PC-9 (cell line): ENCODE measurements at regions of chr1 and their contacts with region 1.

Region 1: DNA sequence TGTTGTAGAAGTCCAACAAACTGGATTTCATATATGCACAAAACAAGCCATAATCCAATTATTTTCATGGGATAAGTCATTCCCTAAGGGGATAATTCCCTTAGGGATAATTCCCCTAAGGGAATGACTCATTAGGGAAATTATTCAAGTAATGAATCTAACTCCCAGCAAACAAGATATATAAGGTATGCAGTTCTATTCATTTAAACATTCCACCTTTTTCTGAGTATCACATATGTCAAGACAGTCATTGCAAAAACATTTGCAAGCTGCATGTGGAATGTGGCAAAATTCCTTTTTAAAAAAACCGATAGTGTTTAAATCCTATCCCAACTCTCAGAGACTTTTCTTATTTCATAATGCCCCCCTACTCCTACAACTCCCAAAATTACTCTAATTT is 131.2 kb downstream of the AKT3 start:
- DNase-seq: peak in 1 of 2 experiments; percentile 76
- H3K4me3 ChIP-seq: no peak overlapping the region
- H3K27ac ChIP-seq: peak overlapping the region; percentile 61
- H3K4me1 ChIP-seq: peaks cover 19% of the 10 kb centered on the region
- H3K27me3 ChIP-seq: no peaks in the 10 kb centered on the region
- CTCF ChIP-seq: no peak

Region 2: DNA sequence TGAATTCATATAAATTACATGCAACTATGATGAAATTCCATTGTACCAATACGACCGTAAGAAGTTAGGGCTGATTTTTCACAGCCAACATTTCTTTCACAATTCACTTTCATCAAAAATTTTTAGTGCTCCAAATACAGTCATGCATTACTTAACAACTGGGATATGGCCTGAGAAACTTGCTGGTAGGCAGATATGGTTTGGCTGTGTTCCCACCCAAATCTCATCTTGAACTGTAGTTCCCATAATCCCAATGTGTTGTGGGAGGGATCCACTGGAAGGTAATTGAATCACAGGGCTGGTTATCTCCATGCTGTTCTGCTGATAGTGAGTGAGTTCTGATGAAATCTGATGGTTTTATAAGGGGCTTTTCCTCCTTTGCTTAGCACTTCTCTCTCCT is 113.3 kb before region 1 on chr1:
- CTCF ChIA-PET with region 1: no interaction called
- POLR2A ChIA-PET with region 1: no interaction called
- intact Hi-C with region 1: no loop called
- DNase-seq: no peak
- H3K4me3 ChIP-seq: no peak overlapping the region
- H3K27ac ChIP-seq: no peak overlapping the region
- H3K4me1 ChIP-seq: no peaks in the 10 kb centered on the region
- H3K27me3 ChIP-seq: no peaks in the 10 kb centered on the region
- CTCF ChIP-seq: no peak

Region 3: GRCh38 chr1:243770860-243771259 is 52.0 kb after region 1 on chr1:
- CTCF ChIA-PET with region 1: no interaction called
- POLR2A ChIA-PET with region 1: interaction called, 17 read pairs
- intact Hi-C with region 1: no loop called
- DNase-seq: no peak
- H3K4me3 ChIP-seq: no peak overlapping the region
- H3K27ac ChIP-seq: 0 out of 2 replicates have a peak overlapping the region, but pooled peaks have one; percentile 22
- H3K4me1 ChIP-seq: no peaks in the 10 kb centered on the region
- H3K27me3 ChIP-seq: no peaks in the 10 kb centered on the region
- CTCF ChIP-seq: no peak

Region 4: GRCh38 chr1:243786265-243786931 is 67.5 kb after region 1 on chr1:
- CTCF ChIA-PET with region 1: no interaction called
- POLR2A ChIA-PET with region 1: no interaction called
- intact Hi-C with region 1: loop called (anchors 2 kb)
- DNase-seq: peak; percentile 60 to 77
- H3K4me3 ChIP-seq: peak overlapping the region; percentile 17; the same call in 1 of the 2 replicates
- H3K27ac ChIP-seq: peak overlapping the region; percentile 57
- H3K4me1 ChIP-seq: peaks cover 30% of the 10 kb centered on the region
- H3K27me3 ChIP-seq: no peaks in the 10 kb centered on the region
- CTCF ChIP-seq: no peak